Activated CD4-positive, alpha-beta T cell treated with anti-CD3 and anti-CD28 coated beads, Interleukin-2, amount 10 ng/mL, durations not matched to agents 24 days and 14 days (primary cell): ENCODE measurements at regions of chr6 and their contacts with region 1.

Region 1: GRCh38 chr6:130138116-130138908 is 84.4 kb downstream of the SAMD3 start:
- DNase-seq: peak; percentile 70
- H3K4me3 Mint-ChIP-seq: peak overlapping the region; percentile 70
- H3K27ac Mint-ChIP-seq: peak overlapping the region; percentile 74
- H3K4me1 Mint-ChIP-seq: peaks cover 48% of the 10 kb centered on the region
- H3K27me3 Mint-ChIP-seq: no peaks in the 10 kb centered on the region

Region 2: DNA sequence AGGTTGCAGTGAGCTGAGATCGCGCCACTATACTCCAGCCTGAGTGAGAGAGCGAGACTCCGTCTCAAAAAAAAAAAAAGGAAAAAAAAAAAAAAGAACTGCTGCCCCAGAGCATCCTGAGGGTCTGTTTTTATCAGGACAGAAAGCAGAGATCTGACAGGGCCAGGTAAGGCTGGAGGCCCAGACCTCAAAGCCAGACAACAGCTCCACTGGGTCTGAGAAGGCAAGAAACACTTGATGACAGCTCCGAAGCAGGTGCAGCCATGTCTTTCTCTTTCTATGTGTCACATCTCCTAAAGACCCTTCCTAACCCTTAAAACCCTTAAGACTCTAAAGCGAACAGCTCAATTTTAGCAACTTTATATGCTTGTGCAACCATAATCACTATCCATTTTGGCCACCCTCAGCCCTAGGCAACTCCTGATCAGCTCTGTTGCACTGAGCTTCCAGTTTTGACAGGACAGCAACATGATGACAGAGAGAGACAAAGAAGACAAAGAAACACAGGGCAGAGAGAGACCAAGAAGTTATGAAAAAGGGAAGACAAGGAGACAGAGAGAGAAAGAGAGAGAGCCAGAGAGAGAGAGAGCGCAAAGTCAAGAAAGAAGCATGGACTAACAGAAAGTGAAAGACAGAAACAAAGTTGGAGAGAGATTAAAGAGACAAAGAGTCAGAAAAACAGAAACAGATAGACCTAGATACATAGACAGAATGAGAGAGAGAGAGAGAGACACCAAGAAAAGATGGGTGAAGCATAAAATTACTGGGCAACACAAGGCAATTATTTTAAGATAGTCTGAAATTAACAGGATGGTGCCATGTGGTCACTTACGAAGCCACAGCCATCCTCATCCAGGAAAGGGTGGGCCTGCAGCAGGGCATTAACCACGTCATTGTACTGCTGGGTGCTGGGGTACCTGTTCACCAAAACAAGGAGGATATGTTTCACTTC is 45.2 kb after region 1 on chr6:
- intact Hi-C with region 1: loop called (anchors 2 kb)
- DNase-seq: peak; percentile 83
- H3K4me3 Mint-ChIP-seq: peak overlapping the region; percentile 83
- H3K27ac Mint-ChIP-seq: peak overlapping the region; percentile 90
- H3K4me1 Mint-ChIP-seq: peaks cover 36% of the 10 kb centered on the region
- H3K27me3 Mint-ChIP-seq: no peaks in the 10 kb centered on the region

Region 3: GRCh38 chr6:130206479-130206878 is 68.2 kb after region 1 on chr6:
- intact Hi-C with region 1: no loop called
- DNase-seq: no peak
- H3K4me3 Mint-ChIP-seq: no peak overlapping the region
- H3K27ac Mint-ChIP-seq: no peak overlapping the region
- H3K4me1 Mint-ChIP-seq: peaks cover 22% of the 10 kb centered on the region
- H3K27me3 Mint-ChIP-seq: no peaks in the 10 kb centered on the region